H1 (cell line): ENCODE measurements at regions of chr1 and their contacts with region 1.

Region 1: GRCh38 chr1:203504397-203505250 is 10.7 kb downstream of the OPTC start:
- DNase-seq: peak in 1 of 2 experiments; percentile 90
- H3K4me3 ChIP-seq: no peak overlapping the region
- H3K27ac ChIP-seq: no peak overlapping the region
- H3K4me1 ChIP-seq: peaks cover 2 to 17% (median 11%) of the 10 kb centered on the region in 4 experiments
- H3K27me3 ChIP-seq: no peaks in the 10 kb centered on the region
- CTCF ChIP-seq: peak; percentile 60 to 87 (median 78)
- EP300 ChIP-seq: no peak
- POLR2A ChIP-seq: no peak
- RAD21 ChIP-seq: peak; percentile 94 to 95

Region 2: GRCh38 chr1:203486618-203487370 is 17.8 kb before region 1 on chr1:
- CTCF ChIA-PET with region 1: interaction called, 44 read pairs
- POLR2A ChIA-PET with region 1: no interaction called
- DNase-seq: no peak
- H3K4me3 ChIP-seq: peak overlapping the region; percentile 25 to 60 (median 38); a peak in 6 of 8 replicates
- H3K27ac ChIP-seq: peak overlapping the region; percentile 34; the same call in 1 of the 2 replicates
- H3K4me1 ChIP-seq: peaks cover 0 to 11% (median 5%) of the 10 kb centered on the region in 4 experiments; a peak in 6 of 7 replicates
- H3K27me3 ChIP-seq: no peaks in the 10 kb centered on the region
- CTCF ChIP-seq: no peak
- EP300 ChIP-seq: no peak
- POLR2A ChIP-seq: no peak
- RAD21 ChIP-seq: no peak

Region 3: GRCh38 chr1:203526572-203526971 is 21.9 kb after region 1 on chr1:
- CTCF ChIA-PET with region 1: interaction called, 108 read pairs
- POLR2A ChIA-PET with region 1: no interaction called
- DNase-seq: no peak
- H3K4me3 ChIP-seq: no peak overlapping the region
- H3K27ac ChIP-seq: no peak overlapping the region
- H3K4me1 ChIP-seq: peaks cover 7 to 21% (median 18%) of the 10 kb centered on the region in 4 experiments
- H3K27me3 ChIP-seq: peaks cover 0 to 5% (median 4%) of the 10 kb centered on the region in 4 experiments; a peak in 3 of 7 replicates
- CTCF ChIP-seq: no peak
- EP300 ChIP-seq: no peak
- POLR2A ChIP-seq: no peak
- RAD21 ChIP-seq: no peak

Region 4: GRCh38 chr1:203572134-203572625 is 67.6 kb after region 1 on chr1:
- CTCF ChIA-PET with region 1: interaction called, 79 read pairs
- POLR2A ChIA-PET with region 1: no interaction called
- DNase-seq: peak in 1 of 2 experiments; percentile 60
- H3K4me3 ChIP-seq: no peak overlapping the region
- H3K27ac ChIP-seq: 0 out of 2 replicates have a peak overlapping the region, but pooled peaks have one; percentile 18
- H3K4me1 ChIP-seq: peaks cover 0 to 9% (median 4%) of the 10 kb centered on the region in 4 experiments; a peak in 6 of 7 replicates
- H3K27me3 ChIP-seq: no peaks in the 10 kb centered on the region
- CTCF ChIP-seq: no peak
- EP300 ChIP-seq: peak in 1 of 2 experiments; percentile 18; a peak in 1 of 3 replicates
- POLR2A ChIP-seq: no peak
- RAD21 ChIP-seq: no peak

Region 5: GRCh38 chr1:203615061-203615581 is 110.5 kb after region 1 on chr1:
- CTCF ChIA-PET with region 1: interaction called, 26 read pairs
- POLR2A ChIA-PET with region 1: no interaction called
- DNase-seq: no peak
- H3K4me3 ChIP-seq: no peak overlapping the region
- H3K27ac ChIP-seq: no peak overlapping the region
- H3K4me1 ChIP-seq: no peaks in the 10 kb centered on the region
- H3K27me3 ChIP-seq: no peaks in the 10 kb centered on the region
- CTCF ChIP-seq: no peak
- EP300 ChIP-seq: no peak
- POLR2A ChIP-seq: no peak
- RAD21 ChIP-seq: peak in 1 of 2 experiments; percentile 47; a peak in 3 of 4 replicates

Region 6: DNA sequence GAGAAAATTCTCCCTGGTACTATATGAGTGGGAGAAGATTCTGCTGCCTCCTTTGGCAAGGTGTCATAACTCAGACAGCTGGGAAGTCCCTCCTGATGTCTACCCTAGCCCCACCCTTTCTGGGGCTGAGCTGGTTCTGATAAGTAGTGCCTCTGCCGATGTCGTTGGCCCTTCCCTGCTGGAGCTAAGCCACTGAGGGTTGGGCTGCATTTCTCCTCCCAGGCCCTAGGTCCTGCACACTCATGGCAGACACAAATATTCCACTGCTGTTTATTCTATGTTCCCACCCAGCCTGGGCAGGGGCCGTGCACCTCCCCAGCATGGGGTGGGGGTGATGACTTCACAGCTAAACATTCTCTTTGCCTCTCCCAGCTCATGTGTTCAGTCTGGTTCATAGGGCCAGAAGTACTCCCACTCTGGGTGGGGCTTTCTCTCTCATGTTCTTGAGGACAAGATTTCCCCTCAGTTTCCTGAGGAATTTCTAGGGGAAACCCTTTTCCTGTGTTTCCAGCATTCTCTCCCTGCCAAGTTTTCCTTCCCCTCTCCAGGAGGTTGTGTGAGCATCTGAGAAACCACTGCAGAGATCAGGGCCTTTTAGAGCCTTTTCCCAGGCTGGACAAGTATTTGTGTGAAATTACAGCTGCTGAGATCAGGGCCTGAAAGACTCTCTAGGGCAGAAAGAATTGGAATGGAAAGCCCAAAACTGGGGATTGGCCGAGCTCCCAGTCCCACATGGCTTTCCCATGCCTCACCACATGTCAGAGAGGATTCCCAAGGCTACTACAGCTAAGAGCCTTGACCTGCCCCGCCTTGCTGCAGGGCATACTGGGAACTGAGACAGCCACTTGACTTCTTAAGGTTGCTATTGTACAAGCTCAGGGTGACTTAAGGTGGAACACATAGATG is 188.2 kb after region 1 on chr1:
- CTCF ChIA-PET with region 1: interaction called, 162 read pairs
- POLR2A ChIA-PET with region 1: no interaction called
- DNase-seq: no peak
- H3K4me3 ChIP-seq: no peak overlapping the region
- H3K27ac ChIP-seq: no peak overlapping the region
- H3K4me1 ChIP-seq: peaks cover 0 to 10% (median 2%) of the 10 kb centered on the region in 4 experiments; a peak in 4 of 7 replicates
- H3K27me3 ChIP-seq: peaks cover 0 to 2% (median 0%) of the 10 kb centered on the region in 4 experiments; a peak in 1 of 7 replicates
- CTCF ChIP-seq: no peak
- EP300 ChIP-seq: no peak
- POLR2A ChIP-seq: no peak
- RAD21 ChIP-seq: no peak

Region 7: GRCh38 chr1:203795441-203796235 is 291.0 kb after region 1 on chr1 and contains the starts of genes ZBED6 and ZC3H11A:
- CTCF ChIA-PET with region 1: no interaction called
- POLR2A ChIA-PET with region 1: no interaction called
- DNase-seq: peak; percentile 94 to 98
- H3K4me3 ChIP-seq: peak within 1 kb of the TSS; percentile 84 to 92 (median 86)
- H3K27ac ChIP-seq: peak within 1 kb of the TSS; percentile 94
- H3K4me1 ChIP-seq: peaks cover 0 to 4% (median 0%) of the 10 kb centered on the region in 4 experiments; a peak in 1 of 7 replicates
- H3K27me3 ChIP-seq: no peaks in the 10 kb centered on the region
- CTCF ChIP-seq: no peak
- EP300 ChIP-seq: no peak
- POLR2A ChIP-seq: peak; percentile 69 to 90
- RAD21 ChIP-seq: no peak
- total RNA-seq, gene ZBED6: 24.1 and 25.9 TPM in 2 replicates
- total RNA-seq, gene ZC3H11A: 102 and 105 TPM in 2 replicates